ENCODE measurements at regions of chr4 and their contacts with region 1.

Region 1: DNA sequence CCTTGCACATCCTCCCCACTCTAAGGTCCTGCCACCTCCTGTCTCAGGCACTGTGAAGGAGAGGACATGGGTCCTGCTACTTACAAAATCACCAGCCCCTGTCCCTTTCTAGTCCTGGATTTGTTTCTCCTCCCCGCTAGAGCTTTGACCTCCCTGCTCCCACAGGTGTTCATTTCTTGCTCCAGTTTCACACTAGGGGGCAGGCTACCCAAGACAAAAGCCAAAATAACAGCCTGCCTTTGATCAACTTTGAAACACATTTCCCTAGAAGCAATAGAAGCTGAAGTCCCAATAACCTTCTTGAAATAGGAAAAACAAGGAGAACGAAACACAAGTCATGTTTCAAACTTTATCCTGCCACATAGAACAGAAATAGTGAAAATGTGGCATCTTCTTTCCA is 164.4 kb downstream of the QDPR start:
- DNase-seq: peak; percentile 54
- H3K4me3 Mint-ChIP-seq: no peak overlapping the region
- H3K27ac Mint-ChIP-seq: no peak overlapping the region
- H3K4me1 Mint-ChIP-seq: no peaks in the 10 kb centered on the region
- H3K27me3 Mint-ChIP-seq: no peaks in the 10 kb centered on the region

Region 2: DNA sequence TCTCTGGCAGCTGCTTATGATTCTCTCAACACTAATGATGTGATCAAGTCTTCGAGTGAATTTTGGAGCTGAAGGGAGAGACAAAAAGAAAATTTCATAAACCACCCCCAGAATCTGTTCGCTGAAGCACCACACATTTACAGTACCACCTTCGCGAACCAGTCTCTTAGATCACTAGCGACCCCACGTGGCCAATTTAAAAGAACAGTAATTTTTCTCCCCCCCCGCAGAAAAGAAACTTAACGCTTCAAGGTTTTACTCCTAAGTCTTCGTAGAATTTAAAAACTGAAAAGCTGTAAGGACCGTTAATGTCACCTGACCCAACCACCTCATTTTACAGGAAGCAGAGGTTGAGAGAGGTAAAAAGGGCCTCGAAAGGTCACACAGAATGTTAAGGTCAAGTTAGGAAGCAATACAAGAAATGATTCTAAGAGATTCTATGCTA is 23.0 kb before region 1 on chr4:
- CTCF ChIA-PET with region 1: interaction called, 10 read pairs
- DNase-seq: peak; percentile 56
- H3K4me3 Mint-ChIP-seq: no peak overlapping the region
- H3K27ac Mint-ChIP-seq: no peak overlapping the region
- H3K4me1 Mint-ChIP-seq: peaks cover 9% of the 10 kb centered on the region
- H3K27me3 Mint-ChIP-seq: peaks cover 23% of the 10 kb centered on the region

Region 3: DNA sequence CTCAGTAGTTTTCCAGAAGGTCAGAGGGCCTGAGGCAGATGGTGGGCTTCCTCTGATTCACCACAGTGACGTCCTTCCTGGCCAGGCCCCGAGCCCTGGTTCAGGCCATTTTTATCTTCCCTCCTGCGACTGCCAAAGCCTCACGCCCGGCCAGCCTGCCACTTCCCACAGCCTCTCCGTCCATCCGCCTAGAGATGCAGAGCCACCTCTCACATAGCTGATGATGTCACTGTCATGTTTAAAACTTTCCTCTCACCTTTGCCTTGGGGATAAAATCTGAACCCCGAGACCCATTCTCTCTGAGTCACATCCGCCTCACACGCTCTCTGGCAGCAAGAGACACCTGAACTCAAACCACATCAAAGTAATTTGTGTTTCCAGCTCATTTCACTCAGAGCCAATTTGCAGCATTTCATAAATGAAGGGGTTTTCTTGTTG is 10.9 kb before region 1 on chr4:
- CTCF ChIA-PET with region 1: interaction called, 25 read pairs
- DNase-seq: peak; percentile 83
- H3K4me3 Mint-ChIP-seq: no peak overlapping the region
- H3K27ac Mint-ChIP-seq: peak overlapping the region; percentile 64
- H3K4me1 Mint-ChIP-seq: peaks cover 31% of the 10 kb centered on the region
- H3K27me3 Mint-ChIP-seq: peaks cover 20% of the 10 kb centered on the region

Region 4: DNA sequence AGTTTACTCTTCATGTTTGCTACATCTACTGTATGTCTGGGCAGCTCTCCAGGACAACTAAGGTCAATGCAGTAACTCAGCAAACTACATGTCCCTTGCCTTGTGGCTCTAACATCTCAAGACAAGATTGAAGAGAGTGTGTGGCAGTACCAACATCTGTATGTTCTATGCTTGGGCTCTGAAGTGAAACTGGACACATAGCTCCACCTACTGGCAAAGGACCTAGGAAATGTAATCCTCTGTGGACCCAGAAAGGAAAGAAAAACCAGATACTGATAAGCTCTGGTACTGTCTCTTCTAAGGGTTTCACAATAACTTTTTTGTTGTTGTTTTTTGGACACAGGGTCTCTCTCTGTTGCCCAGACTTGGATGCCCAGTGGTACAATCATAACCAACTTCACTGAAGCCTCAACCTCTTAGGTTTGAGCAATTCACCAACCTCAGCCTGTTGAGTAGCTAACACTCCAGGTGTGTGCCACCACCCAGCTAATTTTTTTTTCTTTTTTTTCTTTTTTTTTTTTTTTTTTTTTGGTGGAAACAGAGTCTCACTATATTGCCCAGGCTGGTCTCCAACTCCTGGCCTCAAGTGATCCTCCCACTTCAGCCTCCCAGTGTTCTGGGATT is 100.3 kb after region 1 on chr4:
- CTCF ChIA-PET with region 1: interaction called, 52 read pairs
- DNase-seq: peak; percentile 74
- H3K4me3 Mint-ChIP-seq: no peak overlapping the region
- H3K27ac Mint-ChIP-seq: no peak overlapping the region
- H3K4me1 Mint-ChIP-seq: no peaks in the 10 kb centered on the region
- H3K27me3 Mint-ChIP-seq: peaks cover 7% of the 10 kb centered on the region

Region 5: DNA sequence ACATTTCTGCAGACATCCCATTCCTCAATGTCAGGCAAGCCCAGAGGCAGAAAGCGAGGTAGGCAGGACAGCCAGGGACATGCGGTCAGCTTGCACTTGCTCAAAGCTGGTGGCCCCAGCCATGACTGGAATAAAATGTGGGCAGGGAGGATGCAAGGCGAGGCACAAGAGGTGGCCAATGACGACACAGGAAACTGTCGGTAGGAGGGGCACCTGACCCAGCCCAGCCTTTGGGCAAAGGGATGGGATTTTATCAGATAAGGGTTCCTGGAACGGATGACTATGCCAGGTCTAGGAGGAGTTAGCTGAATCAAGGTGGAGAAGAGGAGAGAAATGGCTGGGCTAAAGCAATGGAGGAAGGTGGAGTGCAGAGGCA is 123.2 kb after region 1 on chr4:
- CTCF ChIA-PET with region 1: interaction called, 17 read pairs
- DNase-seq: no peak
- H3K4me3 Mint-ChIP-seq: no peak overlapping the region
- H3K27ac Mint-ChIP-seq: no peak overlapping the region
- H3K4me1 Mint-ChIP-seq: no peaks in the 10 kb centered on the region
- H3K27me3 Mint-ChIP-seq: no peaks in the 10 kb centered on the region

Region 6: GRCh38 chr4:17494258-17494657 is 146.8 kb after region 1 on chr4:
- CTCF ChIA-PET with region 1: no interaction called
- DNase-seq: no peak
- H3K4me3 Mint-ChIP-seq: no peak overlapping the region
- H3K27ac Mint-ChIP-seq: no peak overlapping the region
- H3K4me1 Mint-ChIP-seq: peaks cover 5% of the 10 kb centered on the region
- H3K27me3 Mint-ChIP-seq: no peaks in the 10 kb centered on the region

Measured in activated naive CD4-positive, alpha-beta T cell treated with anti-CD3 and anti-CD28 coated beads, Interleukin-2, amount 10 ng/mL, durations not matched to agents 7 days and 5 days (primary cell).